Dorsolateral prefrontal cortex (tissue), 120 donors: ENCODE measurements at regions of chr5 and their contacts with region 1.

Region 1: GRCh38 chr5:117249080-117249815 is 674.6 kb upstream of the SEMA6A start:
- DNase-seq: no peak
- H3K4me3 ChIP-seq: peak overlapping the region in 8 of 59 donors; percentile 3 to 31 (median 18)
- H3K27ac ChIP-seq: peak overlapping the region; percentile 43 to 98 (median 92)
- H3K27me3 ChIP-seq: peaks cover 0 to 4% (median 0%) of the 10 kb centered on the region in 45 donors
- CTCF ChIP-seq: peak in 1 of 56 donors; percentile 17

Region 2: GRCh38 chr5:117188211-117188610 is 61.0 kb before region 1 on chr5:
- intact Hi-C with region 1: loop called in 1 of 2 experiments (anchors 5 kb)
- DNase-seq: no peak
- H3K4me3 ChIP-seq: no peak overlapping the region
- H3K27ac ChIP-seq: peak overlapping the region in 1 of 59 donors; percentile 26
- H3K27me3 ChIP-seq: no peaks in the 10 kb centered on the region
- CTCF ChIP-seq: no peak

Region 3: GRCh38 chr5:117220730-117221129 is 28.5 kb before region 1 on chr5:
- intact Hi-C with region 1: no loop called
- DNase-seq: no peak
- H3K4me3 ChIP-seq: no peak overlapping the region
- H3K27ac ChIP-seq: no peak overlapping the region
- H3K27me3 ChIP-seq: no peaks in the 10 kb centered on the region
- CTCF ChIP-seq: no peak